A673 (cell line): ENCODE measurements at regions of chr5 and their contacts with region 1.

Region 1: GRCh38 chr5:138503487-138504270 is 38.4 kb downstream of the EGR1 start:
- DNase-seq: peak; percentile 80
- H3K4me3 ChIP-seq: no peak overlapping the region
- H3K27ac ChIP-seq: no peak overlapping the region
- H3K4me1 ChIP-seq: peaks cover 12% of the 10 kb centered on the region
- H3K27me3 ChIP-seq: no peaks in the 10 kb centered on the region
- CTCF ChIP-seq: peak; percentile 79

Region 2: GRCh38 chr5:137605411-137605810 is 898.3 kb before region 1 on chr5:
- CTCF ChIA-PET with region 1: no interaction called
- POLR2A ChIA-PET with region 1: no interaction called
- intact Hi-C with region 1: no loop called
- DNase-seq: peak; percentile 52
- H3K4me3 ChIP-seq: no peak overlapping the region
- H3K27ac ChIP-seq: no peak overlapping the region
- H3K4me1 ChIP-seq: no peaks in the 10 kb centered on the region
- H3K27me3 ChIP-seq: peaks cover 14% of the 10 kb centered on the region
- CTCF ChIP-seq: peak; percentile 54

Region 3: GRCh38 chr5:138148811-138149210 is 354.9 kb before region 1 on chr5:
- CTCF ChIA-PET with region 1: no interaction called
- POLR2A ChIA-PET with region 1: interaction called, 15 read pairs
- intact Hi-C with region 1: no loop called
- DNase-seq: peak; percentile 21
- H3K4me3 ChIP-seq: no peak overlapping the region
- H3K27ac ChIP-seq: no peak overlapping the region
- H3K4me1 ChIP-seq: no peaks in the 10 kb centered on the region
- H3K27me3 ChIP-seq: no peaks in the 10 kb centered on the region
- CTCF ChIP-seq: no peak